Transverse colon (tissue), 4 donors: ENCODE measurements at regions of chr1 and their contacts with region 1.

Region 1: DNA sequence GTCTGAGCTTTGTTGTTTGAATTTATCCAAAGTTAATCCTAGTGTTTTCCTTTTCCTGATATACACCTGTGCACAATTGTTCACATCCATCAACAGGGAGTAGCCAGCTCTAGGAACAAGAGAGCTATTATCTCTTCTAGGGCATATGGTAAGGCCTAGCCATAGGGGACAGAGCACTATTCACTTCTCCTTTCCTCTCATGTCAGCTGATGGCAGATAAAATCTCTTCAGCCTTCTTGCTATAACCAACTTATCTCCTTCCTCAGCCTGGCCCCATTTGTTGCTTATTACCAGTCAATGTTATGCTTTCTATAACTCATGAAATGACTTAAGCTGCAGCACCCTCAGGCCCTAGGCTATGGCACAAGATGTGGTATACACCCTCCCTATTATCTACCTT is 38.9 kb downstream of the PATJ start:
- DNase-seq: no peak
- H3K4me3 ChIP-seq: no peak overlapping the region
- H3K27ac ChIP-seq: no peak overlapping the region
- H3K4me1 ChIP-seq: no peaks in the 10 kb centered on the region
- H3K27me3 ChIP-seq: no peaks in the 10 kb centered on the region
- CTCF ChIP-seq: no peak
- EP300 ChIP-seq: no peak
- POLR2A ChIP-seq: no peak

Region 2: DNA sequence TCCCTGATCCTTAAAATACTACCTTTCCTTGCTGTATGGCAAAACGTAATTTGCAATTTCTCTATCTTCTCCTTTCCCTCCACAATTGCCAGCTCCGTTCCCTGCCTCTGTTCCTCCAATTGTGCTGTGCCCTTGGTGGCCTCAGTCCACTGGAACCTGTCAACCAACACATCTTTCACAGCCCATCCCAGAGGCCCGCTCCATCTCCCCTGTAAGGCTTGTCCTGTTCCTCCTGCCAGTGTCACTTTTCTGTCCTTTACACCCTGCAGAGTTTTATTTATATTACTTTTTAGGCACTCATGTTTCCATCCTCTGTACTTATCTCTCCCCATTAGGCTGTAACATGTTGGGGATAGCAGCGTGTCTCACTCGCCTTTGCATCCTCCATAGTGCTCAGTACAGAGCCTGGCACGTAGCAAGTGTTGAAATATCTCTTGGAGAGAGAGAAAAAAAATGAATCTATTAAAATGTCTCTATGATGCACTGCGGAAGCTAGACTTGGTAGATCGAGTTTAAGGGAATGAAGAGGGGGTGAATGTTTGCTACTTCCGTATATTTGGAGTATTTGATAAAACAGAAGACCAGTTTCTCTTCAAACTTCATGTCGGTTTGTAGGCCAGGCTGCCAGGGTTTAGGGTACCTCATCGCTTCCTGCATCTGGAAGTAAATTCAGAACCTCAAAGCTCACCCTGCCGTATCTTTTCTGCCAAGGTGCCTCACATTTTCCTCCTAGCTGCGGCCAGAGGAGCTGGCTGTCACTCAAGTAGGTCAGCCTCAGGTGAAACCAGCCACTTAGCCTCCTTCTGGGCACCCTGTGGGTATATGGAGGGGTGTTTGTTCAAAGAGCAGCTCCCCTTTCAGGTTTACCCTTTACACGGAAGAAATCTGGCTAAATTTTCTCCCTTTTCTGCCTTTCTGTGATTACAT is 360.0 kb before region 1 on chr1:
- in situ Hi-C with region 1: no loop called
- intact Hi-C with region 1: no loop called
- DNase-seq: no peak
- H3K4me3 ChIP-seq: no peak overlapping the region
- H3K27ac ChIP-seq: no peak overlapping the region
- H3K4me1 ChIP-seq: peaks cover 0 to 7% (median 0%) of the 10 kb centered on the region in 4 donors
- H3K27me3 ChIP-seq: no peaks in the 10 kb centered on the region
- CTCF ChIP-seq: no peak
- EP300 ChIP-seq: no peak
- POLR2A ChIP-seq: no peak

Region 3: DNA sequence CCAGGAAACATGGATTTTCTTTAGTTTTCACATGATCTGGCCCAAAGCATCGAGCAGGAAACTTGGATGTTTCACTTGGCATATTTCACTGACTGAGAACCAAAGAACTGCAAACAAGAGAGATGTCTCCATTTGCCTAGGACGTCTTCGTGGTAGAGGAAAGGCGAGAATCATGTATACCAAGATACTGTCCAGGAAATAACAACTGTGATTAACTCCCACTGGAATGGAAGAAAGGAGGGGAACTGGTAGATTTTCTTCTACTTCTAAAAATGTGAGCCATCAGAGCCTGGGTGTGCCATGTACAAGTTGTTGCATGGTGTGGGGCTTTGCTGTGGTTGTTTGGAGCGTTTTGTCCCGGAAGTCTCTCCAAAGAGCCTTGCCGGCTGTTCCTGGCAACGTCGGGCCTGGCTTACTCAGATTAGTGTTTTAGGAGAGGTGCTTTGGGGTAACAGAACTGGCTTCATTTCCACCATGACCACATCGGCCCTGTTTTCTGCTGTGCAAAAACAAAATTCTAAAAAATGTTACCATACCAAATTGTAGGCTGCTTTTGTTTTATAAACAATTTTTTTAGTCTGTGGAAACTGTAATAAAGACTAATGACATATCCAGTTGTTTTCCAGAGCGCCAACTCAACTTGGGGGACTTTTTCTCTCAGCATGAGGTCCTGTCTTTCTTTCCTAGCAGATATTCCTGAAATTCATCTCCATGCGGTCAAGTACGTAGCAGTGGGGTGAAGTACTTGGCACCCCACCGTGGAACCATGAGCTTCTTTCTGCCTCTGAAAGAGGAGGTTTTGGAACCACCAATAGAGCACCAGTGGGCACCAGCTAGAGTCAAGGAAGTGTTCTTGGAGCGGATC is 174.5 kb before region 1 on chr1:
- in situ Hi-C with region 1: no loop called
- intact Hi-C with region 1: no loop called
- DNase-seq: peak; percentile 28
- H3K4me3 ChIP-seq: no peak overlapping the region
- H3K27ac ChIP-seq: peak overlapping the region; percentile 31 to 67 (median 60)
- H3K4me1 ChIP-seq: no peaks in the 10 kb centered on the region
- H3K27me3 ChIP-seq: no peaks in the 10 kb centered on the region
- CTCF ChIP-seq: no peak
- EP300 ChIP-seq: no peak
- POLR2A ChIP-seq: no peak

Region 4: GRCh38 chr1:61708953-61709907 is 71.9 kb before region 1 on chr1:
- in situ Hi-C with region 1: no loop called
- intact Hi-C with region 1: no loop called
- DNase-seq: no peak
- H3K4me3 ChIP-seq: no peak overlapping the region
- H3K27ac ChIP-seq: no peak overlapping the region
- H3K4me1 ChIP-seq: peaks cover 0 to 8% (median 0%) of the 10 kb centered on the region in 4 donors
- H3K27me3 ChIP-seq: no peaks in the 10 kb centered on the region
- CTCF ChIP-seq: no peak
- EP300 ChIP-seq: no peak
- POLR2A ChIP-seq: no peak

Region 5: DNA sequence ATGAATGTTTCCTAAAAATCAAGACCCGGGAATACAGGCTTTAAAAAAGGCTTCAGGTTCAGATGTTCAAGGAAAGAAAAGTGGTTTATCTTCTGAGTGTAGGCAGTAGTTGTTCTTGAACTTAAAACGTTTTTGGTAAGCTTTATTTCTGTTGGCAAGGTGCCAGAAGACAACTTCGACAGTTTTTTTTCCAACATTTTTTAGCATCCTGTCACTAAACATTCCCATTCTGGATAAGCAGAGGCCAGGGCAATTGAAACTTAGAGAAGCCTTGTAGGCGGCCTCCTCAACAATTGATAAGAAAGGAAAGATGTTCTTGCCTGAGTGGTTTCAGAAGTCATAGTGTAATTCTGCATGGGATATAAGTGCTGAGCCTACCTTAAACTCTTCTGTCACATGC is 27.8 kb after region 1 on chr1:
- in situ Hi-C with region 1: no loop called
- intact Hi-C with region 1: loop called (anchors 1 kb)
- DNase-seq: no peak
- H3K4me3 ChIP-seq: no peak overlapping the region
- H3K27ac ChIP-seq: no peak overlapping the region
- H3K4me1 ChIP-seq: no peaks in the 10 kb centered on the region
- H3K27me3 ChIP-seq: no peaks in the 10 kb centered on the region
- CTCF ChIP-seq: no peak
- EP300 ChIP-seq: no peak
- POLR2A ChIP-seq: no peak